Common myeloid progenitor, CD34-positive (primary cell): ENCODE measurements at regions of chr7 and their contacts with region 1.

Region 1: DNA sequence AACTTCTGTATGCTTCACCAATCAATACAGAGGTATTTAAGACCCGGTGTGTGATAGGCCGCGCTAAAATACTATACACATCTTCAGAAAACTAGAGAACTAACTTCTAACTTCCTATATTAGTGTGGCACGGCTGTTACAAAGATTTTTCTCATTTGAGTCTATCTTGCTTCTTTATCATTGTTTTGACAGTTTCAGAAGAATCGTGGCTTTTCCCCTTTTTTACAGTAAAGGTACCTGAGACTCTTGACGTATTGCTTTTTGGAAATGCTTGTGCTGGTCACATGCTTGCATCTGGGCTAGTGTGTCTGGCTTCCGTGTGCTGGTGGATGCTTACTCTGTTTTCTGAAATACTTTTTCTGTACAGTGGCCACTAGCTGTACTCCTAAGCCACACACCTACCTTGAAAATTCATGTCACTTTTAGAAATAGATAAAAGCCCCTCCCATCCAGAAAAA is 12.7 kb downstream of the IKZF1 start:
- DNase-seq: peak in 1 of 3 donors; percentile 64
- H3K4me3 ChIP-seq: peak overlapping the region in 2 of 7 experiments; percentile 26 to 46
- H3K27ac ChIP-seq: peak overlapping the region; percentile 41 to 65
- H3K4me1 ChIP-seq: peaks cover 50 to 91% (median 76%) of the 10 kb centered on the region in 4 experiments
- H3K27me3 ChIP-seq: no peaks in the 10 kb centered on the region

Region 2: GRCh38 chr7:50212666-50213621 is 104.3 kb before region 1 on chr7:
- CTCF ChIA-PET with region 1: interaction called, 49 read pairs
- POLR2A ChIA-PET with region 1: no interaction called
- DNase-seq: peak; percentile 81 to 97 (median 96)
- H3K4me3 ChIP-seq: peak overlapping the region in 3 of 7 experiments; percentile 20 to 35 (median 32)
- H3K27ac ChIP-seq: peak overlapping the region in 1 of 2 experiments; percentile 63
- H3K4me1 ChIP-seq: peaks cover 35 to 91% (median 75%) of the 10 kb centered on the region in 4 experiments
- H3K27me3 ChIP-seq: no peaks in the 10 kb centered on the region

Region 3: DNA sequence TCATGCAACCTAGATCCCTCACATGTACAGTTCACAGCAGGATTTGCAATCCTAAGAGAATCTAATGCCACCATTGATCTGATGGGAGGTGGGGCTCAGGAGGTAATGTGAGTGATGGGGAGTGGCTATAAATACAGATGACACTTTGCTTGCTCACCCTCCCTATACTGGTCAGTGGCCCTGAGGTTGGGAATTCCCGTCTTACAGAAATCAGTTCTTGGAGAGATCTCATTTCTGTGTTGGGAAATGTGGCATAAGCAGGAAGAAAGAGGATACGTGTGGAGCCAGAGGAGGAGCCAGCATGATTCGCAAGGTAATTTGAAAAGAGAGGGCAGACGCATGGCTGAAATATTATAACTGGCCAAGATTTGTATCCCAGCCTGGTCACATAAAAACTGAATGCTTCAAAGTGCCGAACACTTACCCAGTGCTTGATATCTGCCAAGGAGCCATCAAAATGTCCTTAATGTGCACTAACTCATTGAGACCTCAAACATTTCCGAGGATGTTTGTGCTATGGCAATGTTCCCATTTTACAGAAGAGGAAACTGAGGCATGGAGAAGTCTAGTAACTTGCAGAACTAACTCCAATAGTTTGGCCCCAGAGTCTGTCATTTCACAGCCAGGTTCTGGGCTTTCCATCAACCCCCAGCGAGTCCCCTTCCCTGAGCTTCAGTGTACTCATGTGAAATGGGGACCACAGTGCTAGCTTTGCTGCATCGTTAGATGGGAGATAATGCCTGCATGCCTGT is 18.3 kb before region 1 on chr7:
- CTCF ChIA-PET with region 1: interaction called, 10 read pairs
- POLR2A ChIA-PET with region 1: interaction called, 3 read pairs
- DNase-seq: no peak
- H3K4me3 ChIP-seq: no peak overlapping the region
- H3K27ac ChIP-seq: no peak overlapping the region
- H3K4me1 ChIP-seq: peaks cover 0 to 14% (median 8%) of the 10 kb centered on the region in 4 experiments
- H3K27me3 ChIP-seq: no peaks in the 10 kb centered on the region

Region 4: DNA sequence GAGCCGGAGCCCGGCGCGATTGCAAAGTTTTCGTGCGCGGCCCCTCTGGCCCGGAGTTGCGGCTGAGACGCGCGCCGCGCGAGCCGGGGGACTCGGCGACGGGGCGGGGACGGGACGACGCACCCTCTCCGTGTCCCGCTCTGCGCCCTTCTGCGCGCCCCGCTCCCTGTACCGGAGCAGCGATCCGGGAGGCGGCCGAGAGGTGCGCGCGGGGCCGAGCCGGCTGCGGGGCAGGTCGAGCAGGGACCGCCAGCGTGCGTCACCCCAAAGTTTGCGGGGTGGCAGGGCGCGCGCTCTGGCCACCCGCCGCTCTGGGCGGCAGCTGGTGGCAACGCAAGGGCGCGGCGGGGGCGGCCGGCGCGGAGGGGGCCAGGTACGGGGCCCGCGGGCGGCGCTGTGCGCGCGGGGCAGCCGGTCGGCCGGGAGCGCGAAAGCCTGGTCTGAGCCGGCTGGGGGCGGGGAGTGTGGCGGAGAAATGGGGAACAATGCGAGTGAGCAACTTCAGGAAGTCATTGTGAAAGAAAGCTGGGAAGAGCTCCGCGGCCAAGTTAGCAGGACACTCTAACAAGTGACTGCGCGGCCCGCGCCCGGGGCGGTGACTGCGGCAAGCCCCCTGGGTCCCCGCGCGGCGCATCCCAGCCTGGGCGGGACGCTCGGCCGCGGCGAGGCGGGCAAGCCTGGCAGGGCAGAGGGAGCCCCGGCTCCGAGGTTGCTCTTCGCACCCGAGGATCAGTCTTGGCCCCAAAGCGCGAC is 12.9 kb before region 1 on chr7 and contains the start of gene IKZF1:
- CTCF ChIA-PET with region 1: interaction called, 13 read pairs
- POLR2A ChIA-PET with region 1: interaction called, 6 read pairs
- DNase-seq: peak; percentile 82 to 84 (median 83)
- H3K4me3 ChIP-seq: peak within 1 kb of the TSS; percentile 80 to 100 (median 94)
- H3K27ac ChIP-seq: peak within 1 kb of the TSS; percentile 67 to 87
- H3K4me1 ChIP-seq: peaks cover 22 to 41% (median 33%) of the 10 kb centered on the region in 4 experiments
- H3K27me3 ChIP-seq: no peaks in the 10 kb centered on the region

Region 5: GRCh38 chr7:50335795-50336754 is 18.8 kb after region 1 on chr7:
- CTCF ChIA-PET with region 1: interaction called, 16 read pairs
- POLR2A ChIA-PET with region 1: interaction called, 3 read pairs
- DNase-seq: peak; percentile 69 to 91 (median 91)
- H3K4me3 ChIP-seq: peak overlapping the region in 2 of 7 experiments; percentile 1 to 12
- H3K27ac ChIP-seq: peak overlapping the region; percentile 55 to 87
- H3K4me1 ChIP-seq: peaks cover 64 to 100% (median 97%) of the 10 kb centered on the region in 4 experiments
- H3K27me3 ChIP-seq: no peaks in the 10 kb centered on the region

Region 6: GRCh38 chr7:50359995-50360925 is 43.0 kb after region 1 on chr7:
- CTCF ChIA-PET with region 1: interaction called, 117 read pairs
- POLR2A ChIA-PET with region 1: interaction called, 3 read pairs
- DNase-seq: no peak
- H3K4me3 ChIP-seq: no peak overlapping the region
- H3K27ac ChIP-seq: peak overlapping the region in 1 of 2 experiments; percentile 74
- H3K4me1 ChIP-seq: peaks cover 19 to 95% (median 83%) of the 10 kb centered on the region in 4 experiments
- H3K27me3 ChIP-seq: no peaks in the 10 kb centered on the region

Region 7: GRCh38 chr7:50632561-50633413 is 315.5 kb after region 1 on chr7:
- CTCF ChIA-PET with region 1: no interaction called
- POLR2A ChIA-PET with region 1: no interaction called
- DNase-seq: peak; percentile 35 to 65 (median 62)
- H3K4me3 ChIP-seq: no peak overlapping the region
- H3K27ac ChIP-seq: no peak overlapping the region
- H3K4me1 ChIP-seq: peaks cover 0 to 4% (median 0%) of the 10 kb centered on the region in 4 experiments
- H3K27me3 ChIP-seq: no peaks in the 10 kb centered on the region